Activated CD4-positive, alpha-beta T cell treated with anti-CD3 and anti-CD28 coated beads for 36 hours (primary cell): ENCODE measurements at regions of chr14 and their contacts with region 1.

Region 1: GRCh38 chr14:68843471-68844209 is 50.8 kb upstream of the ZFP36L1 start:
- DNase-seq: peak; percentile 87
- ATAC-seq: peak; percentile 63
- H3K4me3 Mint-ChIP-seq: no peak overlapping the region
- H3K27ac Mint-ChIP-seq: peak overlapping the region; percentile 11
- H3K4me1 Mint-ChIP-seq: peaks cover 25% of the 10 kb centered on the region
- H3K27me3 Mint-ChIP-seq: peaks cover 5% of the 10 kb centered on the region

Region 2: GRCh38 chr14:67837011-67837624 is 1006.5 kb before region 1 on chr14:
- CTCF ChIA-PET with region 1: interaction called, 10 read pairs
- POLR2A ChIA-PET with region 1: no interaction called
- intact Hi-C with region 1: loop called in 1 of 2 experiments (anchors 2 kb)
- DNase-seq: peak; percentile 68
- ATAC-seq: peak; percentile 39
- H3K4me3 Mint-ChIP-seq: no peak overlapping the region
- H3K27ac Mint-ChIP-seq: no peak overlapping the region
- H3K4me1 Mint-ChIP-seq: no peaks in the 10 kb centered on the region
- H3K27me3 Mint-ChIP-seq: no peaks in the 10 kb centered on the region

Region 3: GRCh38 chr14:67934008-67934481 is 909.6 kb before region 1 on chr14:
- CTCF ChIA-PET with region 1: interaction called, 13 read pairs
- POLR2A ChIA-PET with region 1: no interaction called
- intact Hi-C with region 1: loop called (anchors 2 to 5 kb)
- DNase-seq: peak; percentile 11
- ATAC-seq: peak; percentile 65
- H3K4me3 Mint-ChIP-seq: no peak overlapping the region
- H3K27ac Mint-ChIP-seq: peak overlapping the region; percentile 44
- H3K4me1 Mint-ChIP-seq: peaks cover 5% of the 10 kb centered on the region
- H3K27me3 Mint-ChIP-seq: no peaks in the 10 kb centered on the region

Region 4: DNA sequence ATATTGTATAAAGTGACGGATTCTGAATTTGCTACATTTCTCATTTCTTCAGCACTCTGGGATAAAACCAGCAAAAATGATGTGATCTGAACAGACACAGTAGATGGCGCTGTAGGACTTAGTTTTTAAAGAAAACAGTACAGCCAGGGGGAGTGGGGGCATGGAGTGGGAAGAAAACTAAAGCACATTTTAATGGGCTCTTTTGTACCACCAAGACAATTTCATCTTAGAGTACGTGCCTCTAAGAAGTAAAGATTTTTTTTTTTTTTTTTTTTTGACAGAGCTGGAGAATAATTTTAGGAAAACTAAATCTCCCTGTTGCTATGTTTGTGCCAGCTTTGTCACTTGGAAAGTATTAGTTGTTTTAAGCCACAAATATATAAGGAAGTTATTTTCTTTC is 899.7 kb before region 1 on chr14:
- CTCF ChIA-PET with region 1: interaction called, 21 read pairs
- POLR2A ChIA-PET with region 1: no interaction called
- intact Hi-C with region 1: loop called in 1 of 2 experiments (anchors 1 kb)
- DNase-seq: peak; percentile 59
- ATAC-seq: peak; percentile 66
- H3K4me3 Mint-ChIP-seq: no peak overlapping the region
- H3K27ac Mint-ChIP-seq: no peak overlapping the region
- H3K4me1 Mint-ChIP-seq: no peaks in the 10 kb centered on the region
- H3K27me3 Mint-ChIP-seq: no peaks in the 10 kb centered on the region

Region 5: DNA sequence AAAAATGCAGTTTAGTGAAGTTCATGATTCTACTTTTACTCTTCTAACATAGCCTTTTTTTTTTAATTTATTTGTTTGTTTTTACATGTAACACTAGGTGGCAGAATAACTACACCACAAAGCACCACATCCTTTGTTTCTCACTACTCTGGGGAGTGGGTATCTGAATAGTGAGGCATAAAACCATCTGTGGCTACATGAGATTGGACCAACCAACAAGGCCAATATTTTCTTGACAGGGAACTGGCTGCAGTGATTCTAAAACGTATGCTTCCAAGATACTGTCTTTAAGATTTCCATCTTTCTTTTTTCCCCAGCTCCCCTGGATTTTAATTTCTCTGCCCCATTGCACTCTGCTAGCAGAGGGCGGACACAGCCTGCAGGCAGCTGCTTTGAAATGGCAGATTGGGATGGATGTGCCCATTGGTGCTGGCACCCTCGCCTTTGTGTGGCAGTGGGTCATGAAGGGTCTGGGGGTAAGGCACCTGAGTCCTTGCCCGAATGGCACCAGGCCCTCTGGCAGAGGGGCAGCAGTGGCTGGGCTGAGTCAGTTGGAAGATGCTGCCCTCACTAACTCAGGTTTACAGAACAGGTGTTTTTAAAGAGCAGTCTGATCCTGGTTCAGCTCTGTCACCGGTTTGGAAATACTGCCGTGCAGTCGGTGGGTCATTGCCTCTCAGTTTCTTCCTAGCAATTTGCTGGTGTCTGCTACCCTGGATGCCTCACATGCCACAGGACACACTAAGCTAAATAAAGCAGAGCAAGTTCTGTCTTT is 595.0 kb before region 1 on chr14:
- CTCF ChIA-PET with region 1: interaction called, 12 read pairs
- POLR2A ChIA-PET with region 1: no interaction called
- intact Hi-C with region 1: loop called (anchors 1 kb)
- DNase-seq: peak; percentile 14
- ATAC-seq: peak; percentile 65
- H3K4me3 Mint-ChIP-seq: no peak overlapping the region
- H3K27ac Mint-ChIP-seq: no peak overlapping the region
- H3K4me1 Mint-ChIP-seq: peaks cover 42% of the 10 kb centered on the region
- H3K27me3 Mint-ChIP-seq: no peaks in the 10 kb centered on the region

Region 6: DNA sequence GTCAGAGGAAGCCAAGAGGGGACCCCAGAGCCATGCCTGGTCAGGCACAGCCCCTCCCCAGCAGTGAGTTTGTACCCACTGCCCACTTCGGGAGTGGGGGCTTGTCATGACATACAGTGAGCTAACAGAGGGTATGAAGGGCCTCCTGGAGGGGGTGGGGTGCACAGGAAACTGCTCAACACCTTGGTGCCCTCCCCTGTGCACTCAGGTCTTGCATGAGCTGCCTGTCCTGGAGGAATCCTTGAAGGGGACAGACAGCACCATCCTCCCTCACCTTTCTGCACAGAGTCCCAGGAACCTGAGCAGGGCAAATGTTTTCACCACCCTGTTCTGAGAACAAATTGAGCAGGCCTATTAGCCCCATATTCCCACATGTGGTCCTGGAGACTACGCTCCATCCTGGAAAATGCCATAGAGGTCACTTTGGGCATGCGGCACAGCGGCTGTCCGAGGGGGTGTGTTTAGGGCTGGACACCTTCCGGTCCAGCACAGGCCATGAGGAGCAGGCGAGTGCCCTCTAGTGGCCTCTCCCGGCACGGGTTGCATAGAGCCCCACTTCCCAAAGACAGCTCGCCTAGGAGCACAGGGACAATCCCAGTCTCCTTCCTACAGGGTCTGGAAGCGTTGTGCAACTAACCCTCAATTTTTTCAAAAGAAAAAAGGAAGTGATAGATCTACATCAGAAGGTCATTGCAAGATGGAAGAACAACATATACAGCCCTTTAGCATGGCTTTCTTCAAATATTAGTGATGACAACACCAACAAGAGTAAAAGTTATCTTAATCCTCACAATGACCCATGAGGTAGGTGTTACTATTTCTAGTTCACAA is 18.9 kb before region 1 on chr14:
- CTCF ChIA-PET with region 1: interaction called, 18 read pairs
- POLR2A ChIA-PET with region 1: no interaction called
- intact Hi-C with region 1: no loop called
- DNase-seq: peak; percentile 68
- ATAC-seq: peak; percentile 32
- H3K4me3 Mint-ChIP-seq: no peak overlapping the region
- H3K27ac Mint-ChIP-seq: no peak overlapping the region
- H3K4me1 Mint-ChIP-seq: peaks cover 26% of the 10 kb centered on the region
- H3K27me3 Mint-ChIP-seq: no peaks in the 10 kb centered on the region